ENCODE measurements at regions of chrX and their contacts with region 1.

Region 1: GRCh38 chrX:24395775-24396174 is 35.3 kb downstream of the SUPT20HL1 start:
- DNase-seq: no peak
- ATAC-seq: peak; percentile 81 to 91
- H3K4me3 ChIP-seq: no peak overlapping the region
- H3K27ac ChIP-seq: no peak overlapping the region
- H3K4me1 ChIP-seq: no peaks in the 10 kb centered on the region
- H3K27me3 ChIP-seq: no peaks in the 10 kb centered on the region
- CTCF ChIP-seq: peak; percentile 64

Region 2: GRCh38 chrX:24506055-24506454 is 110.3 kb after region 1 on chrX:
- intact Hi-C with region 1: loop called (anchors 10 kb)
- DNase-seq: no peak
- ATAC-seq: no peak
- H3K4me3 ChIP-seq: no peak overlapping the region
- H3K27ac ChIP-seq: no peak overlapping the region
- H3K4me1 ChIP-seq: no peaks in the 10 kb centered on the region
- H3K27me3 ChIP-seq: no peaks in the 10 kb centered on the region
- CTCF ChIP-seq: no peak

Measured in lower lobe of right lung (tissue), 2 donors.